ENCODE measurements at regions of chr4 and their contacts with region 1.

Region 1: GRCh38 chr4:139509727-139510410 is 46.1 kb downstream of the SETD7 start:
- DNase-seq: peak in 3 of 10 donors; percentile 43 to 84 (median 47)

Region 2: DNA sequence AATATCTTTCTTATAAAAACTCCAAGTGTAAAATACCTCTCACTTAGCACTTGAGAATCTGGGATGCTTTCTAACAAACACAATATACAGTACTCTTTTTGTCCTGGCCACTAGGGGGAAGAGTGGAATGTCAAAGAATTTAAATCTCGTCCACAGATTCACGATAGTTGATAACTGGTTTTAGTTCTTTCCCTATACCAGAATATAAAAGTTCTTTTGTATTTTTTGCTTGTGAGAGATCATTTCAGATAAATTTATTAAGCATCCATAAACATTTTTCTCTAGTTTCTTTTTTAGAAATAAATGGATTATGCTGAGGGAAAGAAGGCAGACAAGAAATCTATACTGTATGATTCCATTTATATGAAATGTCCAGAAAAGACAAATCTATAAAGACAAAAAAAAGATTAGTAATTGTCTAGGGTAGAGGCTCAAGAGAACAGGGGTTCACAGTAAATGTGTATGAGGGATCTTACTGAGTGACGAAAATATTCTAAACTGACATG is 280.3 kb before region 1 on chr4:
- intact Hi-C with region 1: loop called (anchors 10 kb)
- DNase-seq: no peak

Measured in posterior cingulate gyrus (tissue), 11 donors.